Caco-2 (cell line): ENCODE measurements at regions of chr13 and their contacts with region 1.

Region 1: GRCh38 chr13:32142956-32143375 is 111.4 kb downstream of the FRY start:
- DNase-seq: peak; percentile 88 to 93
- H3K4me3 ChIP-seq: no peak overlapping the region
- H3K4me3 Mint-ChIP-seq: peak overlapping the region; percentile 34
- H3K27ac Mint-ChIP-seq: peak overlapping the region; percentile 89
- H3K4me1 ChIP-seq: peaks cover 50% of the 10 kb centered on the region
- H3K4me1 Mint-ChIP-seq: peaks cover 64% of the 10 kb centered on the region
- H3K27me3 ChIP-seq: no peaks in the 10 kb centered on the region; the same call in 1 of the 2 replicates
- H3K27me3 Mint-ChIP-seq: no peaks in the 10 kb centered on the region
- CTCF ChIP-seq: no peak

Region 2: GRCh38 chr13:32086366-32086765 is 56.6 kb before region 1 on chr13:
- CTCF ChIA-PET with region 1: no interaction called
- POLR2A ChIA-PET with region 1: no interaction called
- intact Hi-C with region 1: loop called (anchors 5 kb)
- DNase-seq: no peak
- H3K4me3 ChIP-seq: no peak overlapping the region
- H3K4me3 Mint-ChIP-seq: no peak overlapping the region
- H3K27ac Mint-ChIP-seq: no peak overlapping the region
- H3K4me1 ChIP-seq: peaks cover 22% of the 10 kb centered on the region
- H3K4me1 Mint-ChIP-seq: peaks cover 12% of the 10 kb centered on the region
- H3K27me3 ChIP-seq: no peaks in the 10 kb centered on the region
- H3K27me3 Mint-ChIP-seq: no peaks in the 10 kb centered on the region
- CTCF ChIP-seq: no peak

Region 3: DNA sequence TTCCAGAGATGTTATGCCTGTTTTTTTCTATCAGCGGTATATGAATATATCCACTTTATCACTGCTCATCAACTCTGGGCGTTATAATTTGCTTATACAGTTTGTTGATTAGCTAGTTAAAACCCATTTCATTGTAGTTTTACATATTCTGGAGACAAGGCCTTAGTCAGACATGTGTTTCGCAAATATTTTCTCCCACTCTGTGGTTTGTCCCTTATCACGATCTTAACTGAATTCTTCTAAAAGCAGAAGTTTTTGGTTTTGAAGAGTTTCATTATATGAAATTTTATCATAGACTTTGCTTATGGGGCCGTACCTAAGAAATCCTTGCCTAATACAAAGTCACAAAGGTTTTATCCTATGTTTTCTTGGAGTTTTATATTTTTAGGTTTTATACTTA is 26.8 kb before region 1 on chr13:
- CTCF ChIA-PET with region 1: no interaction called
- POLR2A ChIA-PET with region 1: no interaction called
- intact Hi-C with region 1: no loop called
- DNase-seq: no peak
- H3K4me3 ChIP-seq: no peak overlapping the region
- H3K4me3 Mint-ChIP-seq: no peak overlapping the region
- H3K27ac Mint-ChIP-seq: no peak overlapping the region
- H3K4me1 ChIP-seq: no peaks in the 10 kb centered on the region
- H3K4me1 Mint-ChIP-seq: no peaks in the 10 kb centered on the region
- H3K27me3 ChIP-seq: no peaks in the 10 kb centered on the region
- H3K27me3 Mint-ChIP-seq: no peaks in the 10 kb centered on the region
- CTCF ChIP-seq: no peak

Region 4: DNA sequence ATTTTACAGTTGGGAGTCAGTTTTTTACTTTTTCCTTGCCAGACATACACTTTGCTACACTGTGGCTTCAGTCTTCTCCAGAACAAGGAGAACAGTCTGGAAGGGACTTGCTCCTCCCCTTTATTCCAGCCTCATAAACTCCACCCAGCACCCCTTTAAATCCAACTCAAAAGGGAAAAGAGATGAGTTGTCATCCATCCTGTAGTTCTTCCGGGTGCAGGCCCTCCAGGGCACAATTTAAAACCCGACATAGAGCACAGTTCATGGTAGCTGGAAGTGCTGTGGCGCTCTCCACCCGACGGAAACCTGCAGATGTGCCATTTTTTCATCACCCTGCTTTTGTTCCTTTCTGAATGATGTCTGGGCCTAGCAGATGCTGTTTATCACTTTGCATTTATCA is 73.3 kb after region 1 on chr13:
- CTCF ChIA-PET with region 1: no interaction called
- POLR2A ChIA-PET with region 1: no interaction called
- intact Hi-C with region 1: loop called (anchors 2 kb)
- DNase-seq: peak; percentile 64 to 67
- H3K4me3 ChIP-seq: no peak overlapping the region
- H3K4me3 Mint-ChIP-seq: peak overlapping the region; percentile 73
- H3K27ac Mint-ChIP-seq: peak overlapping the region; percentile 85
- H3K4me1 ChIP-seq: peaks cover 70% of the 10 kb centered on the region
- H3K4me1 Mint-ChIP-seq: peaks cover 42% of the 10 kb centered on the region
- H3K27me3 ChIP-seq: no peaks in the 10 kb centered on the region
- H3K27me3 Mint-ChIP-seq: no peaks in the 10 kb centered on the region
- CTCF ChIP-seq: no peak